ENCODE measurements at regions of chr5 and their contacts with region 1.

Region 1: GRCh38 chr5:169980418-169981053 is at the start of gene INSYN2B:
- DNase-seq: peak; percentile 93
- H3K4me3 Mint-ChIP-seq: peak within 1 kb of the TSS; percentile 69
- H3K27ac Mint-ChIP-seq: no peak within 1 kb of the TSS
- H3K4me1 Mint-ChIP-seq: peaks cover 24% of the 10 kb centered on the region
- H3K27me3 Mint-ChIP-seq: no peaks in the 10 kb centered on the region
- CTCF ChIP-seq: peak; percentile 78
- total RNA-seq, gene INSYN2B: 0.19 and 0.49 TPM in 2 replicates

Region 2: GRCh38 chr5:168978015-168978414 is 1002.5 kb before region 1 on chr5:
- CTCF ChIA-PET with region 1: no interaction called
- POLR2A ChIA-PET with region 1: no interaction called
- intact Hi-C with region 1: loop called (anchors 10 kb)
- DNase-seq: peak; percentile 89
- H3K4me3 Mint-ChIP-seq: no peak overlapping the region
- H3K27ac Mint-ChIP-seq: no peak overlapping the region
- H3K4me1 Mint-ChIP-seq: peaks cover 10% of the 10 kb centered on the region
- H3K27me3 Mint-ChIP-seq: no peaks in the 10 kb centered on the region
- CTCF ChIP-seq: no peak

Region 3: GRCh38 chr5:169701910-169702451 is 278.6 kb before region 1 on chr5:
- CTCF ChIA-PET with region 1: interaction called, 10 read pairs
- POLR2A ChIA-PET with region 1: interaction called, 18 read pairs
- intact Hi-C with region 1: loop called (anchors 1 kb)
- DNase-seq: peak; percentile 56
- H3K4me3 Mint-ChIP-seq: no peak overlapping the region
- H3K27ac Mint-ChIP-seq: no peak overlapping the region
- H3K4me1 Mint-ChIP-seq: peaks cover 33% of the 10 kb centered on the region
- H3K27me3 Mint-ChIP-seq: no peaks in the 10 kb centered on the region
- CTCF ChIP-seq: peak; percentile 82

Region 4: DNA sequence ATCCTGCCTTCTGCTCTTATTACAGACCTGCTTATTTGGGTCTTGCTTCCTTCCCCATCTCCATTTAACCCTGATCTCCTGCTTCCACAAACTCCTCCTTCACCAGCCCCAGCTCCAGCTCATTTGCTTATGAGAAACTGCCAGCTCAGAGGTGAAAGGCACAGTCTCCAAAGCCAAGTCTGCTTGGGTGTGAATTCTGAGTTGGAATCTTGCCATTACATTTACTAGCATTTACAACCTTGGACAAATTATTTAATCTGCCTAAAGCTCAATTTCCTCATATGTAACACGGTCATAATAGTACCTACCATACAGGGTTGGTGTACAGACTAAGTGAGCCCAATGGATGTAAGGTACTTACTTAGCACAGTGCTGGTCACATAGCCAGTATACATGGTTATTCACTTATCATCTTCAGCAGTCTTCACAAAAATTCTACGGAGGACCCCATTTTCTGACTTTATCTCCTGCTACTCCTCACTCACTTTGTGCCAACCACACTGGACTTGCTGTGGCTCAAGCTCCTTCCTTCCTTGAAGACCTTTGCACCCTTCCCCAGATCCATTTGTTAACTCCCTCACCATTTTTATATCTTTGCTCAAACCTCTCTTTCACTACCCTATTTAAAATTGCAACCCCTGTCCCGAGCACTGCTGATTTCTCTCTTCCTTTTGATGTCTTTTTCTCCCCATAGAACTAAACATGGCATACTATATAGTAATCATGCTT is 257.3 kb before region 1 on chr5:
- CTCF ChIA-PET with region 1: interaction called, 18 read pairs
- POLR2A ChIA-PET with region 1: interaction called, 3 read pairs
- intact Hi-C with region 1: no loop called
- DNase-seq: peak; percentile 32
- H3K4me3 Mint-ChIP-seq: no peak overlapping the region
- H3K27ac Mint-ChIP-seq: no peak overlapping the region
- H3K4me1 Mint-ChIP-seq: peaks cover 5% of the 10 kb centered on the region
- H3K27me3 Mint-ChIP-seq: no peaks in the 10 kb centered on the region
- CTCF ChIP-seq: no peak

Region 5: GRCh38 chr5:169856571-169856970 is 124.0 kb before region 1 on chr5:
- CTCF ChIA-PET with region 1: interaction called, 4 read pairs
- POLR2A ChIA-PET with region 1: no interaction called
- intact Hi-C with region 1: loop called (anchors 10 kb)
- DNase-seq: peak; percentile 65
- H3K4me3 Mint-ChIP-seq: no peak overlapping the region
- H3K27ac Mint-ChIP-seq: no peak overlapping the region
- H3K4me1 Mint-ChIP-seq: no peaks in the 10 kb centered on the region
- H3K27me3 Mint-ChIP-seq: no peaks in the 10 kb centered on the region
- CTCF ChIP-seq: no peak

Region 6: DNA sequence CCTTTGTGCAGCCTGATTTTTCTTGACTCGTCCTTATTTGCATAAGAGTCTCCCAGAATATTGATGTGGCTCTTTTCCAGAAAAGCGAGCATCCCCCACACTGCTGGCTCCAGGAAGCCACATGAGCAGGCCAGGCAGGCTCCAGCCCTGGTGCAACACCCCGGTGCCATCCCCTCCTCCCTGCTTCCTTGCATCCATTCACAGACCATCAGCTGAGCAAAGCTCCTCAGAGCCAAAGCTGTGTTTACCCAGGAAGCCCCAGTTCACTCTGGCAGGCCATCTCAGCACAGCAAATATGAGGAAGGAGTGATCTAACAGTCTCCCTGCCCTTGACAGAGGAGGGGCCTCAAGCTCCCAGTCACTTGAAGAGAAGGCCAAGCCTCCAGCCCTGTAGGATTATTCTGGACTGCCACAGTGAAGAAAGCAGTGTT is 34.7 kb before region 1 on chr5:
- CTCF ChIA-PET with region 1: interaction called, 19 read pairs
- POLR2A ChIA-PET with region 1: no interaction called
- intact Hi-C with region 1: no loop called
- DNase-seq: peak; percentile 68
- H3K4me3 Mint-ChIP-seq: no peak overlapping the region
- H3K27ac Mint-ChIP-seq: no peak overlapping the region
- H3K4me1 Mint-ChIP-seq: no peaks in the 10 kb centered on the region
- H3K27me3 Mint-ChIP-seq: no peaks in the 10 kb centered on the region
- CTCF ChIP-seq: no peak

Region 7: GRCh38 chr5:170070556-170071412 is 90.2 kb after region 1 on chr5:
- CTCF ChIA-PET with region 1: interaction called, 11 read pairs
- POLR2A ChIA-PET with region 1: no interaction called
- intact Hi-C with region 1: no loop called
- DNase-seq: peak; percentile 60
- H3K4me3 Mint-ChIP-seq: no peak overlapping the region
- H3K27ac Mint-ChIP-seq: no peak overlapping the region
- H3K4me1 Mint-ChIP-seq: no peaks in the 10 kb centered on the region
- H3K27me3 Mint-ChIP-seq: peaks cover 31% of the 10 kb centered on the region
- CTCF ChIP-seq: peak; percentile 81

Measured in MCF 10A (cell line).